PC-3 (cell line): ENCODE measurements at regions of chr1 and their contacts with region 1.

Region 1: GRCh38 chr1:196738730-196739129 is 35.9 kb upstream of the CFHR3 start:
- DNase-seq: no peak
- ATAC-seq: no peak
- H3K4me3 ChIP-seq: no peak overlapping the region
- H3K27ac ChIP-seq: no peak overlapping the region
- H3K4me1 ChIP-seq: no peaks in the 10 kb centered on the region
- H3K27me3 ChIP-seq: no peaks in the 10 kb centered on the region
- CTCF ChIP-seq: no peak

Region 2: GRCh38 chr1:196608390-196609369 is 130.1 kb before region 1 on chr1 and contains the start of gene KCNT2:
- CTCF ChIA-PET with region 1: no interaction called
- POLR2A ChIA-PET with region 1: no interaction called
- intact Hi-C with region 1: no loop called
- DNase-seq: no peak
- ATAC-seq: peak; percentile 58
- H3K4me3 ChIP-seq: peak within 1 kb of the TSS; percentile 67
- H3K27ac ChIP-seq: no peak within 1 kb of the TSS
- H3K4me1 ChIP-seq: no peaks in the 10 kb centered on the region; the same call in 1 of the 2 replicates
- H3K27me3 ChIP-seq: no peaks in the 10 kb centered on the region
- CTCF ChIP-seq: no peak
- total RNA-seq, gene KCNT2: 0.26 and 0.69 TPM in 2 replicates

Region 3: DNA sequence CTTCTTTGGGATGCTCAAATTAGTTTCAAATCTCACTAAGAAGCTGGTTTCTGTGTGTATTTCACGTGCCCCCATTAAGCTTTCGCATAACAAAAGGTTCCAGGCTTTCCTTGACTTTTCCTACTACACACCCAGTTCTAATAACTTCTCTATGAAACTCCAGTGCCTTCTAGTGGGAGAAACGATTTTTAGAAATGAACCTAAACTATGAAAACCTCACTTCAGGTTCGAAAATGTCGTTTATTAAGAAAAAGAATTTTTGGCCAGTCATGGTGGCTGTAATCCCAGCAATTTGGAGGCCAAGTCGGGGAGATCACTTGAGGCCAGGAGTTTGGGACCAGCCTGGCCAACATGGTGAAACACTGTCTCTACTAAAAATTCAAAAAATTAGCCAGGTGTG is 152.0 kb after region 1 on chr1:
- CTCF ChIA-PET with region 1: no interaction called
- POLR2A ChIA-PET with region 1: no interaction called
- intact Hi-C with region 1: loop called (anchors 5 kb)
- DNase-seq: no peak
- ATAC-seq: no peak
- H3K4me3 ChIP-seq: no peak overlapping the region
- H3K27ac ChIP-seq: no peak overlapping the region
- H3K4me1 ChIP-seq: no peaks in the 10 kb centered on the region
- H3K27me3 ChIP-seq: no peaks in the 10 kb centered on the region
- CTCF ChIP-seq: no peak; the same call in 1 of the 2 replicates